ENCODE measurements at regions of chr6 and their contacts with region 1.

Region 1: GRCh38 chr6:144343701-144344428 is 58.7 kb downstream of the UTRN start:
- DNase-seq: peak in 4 of 5 donors; percentile 26 to 78 (median 69)
- H3K4me3 ChIP-seq: peak overlapping the region; percentile 75
- H3K4me3 Mint-ChIP-seq: peak overlapping the region; percentile 91 to 96 (median 94)
- H3K27ac ChIP-seq: peak overlapping the region; percentile 64
- H3K27ac Mint-ChIP-seq: peak overlapping the region; percentile 91 to 99 (median 96)
- H3K4me1 ChIP-seq: peaks cover 58% of the 10 kb centered on the region
- H3K4me1 Mint-ChIP-seq: peaks cover 72 to 90% (median 87%) of the 10 kb centered on the region in 3 donors
- H3K27me3 ChIP-seq: no peaks in the 10 kb centered on the region
- H3K27me3 Mint-ChIP-seq: peaks cover 0 to 1% of the 10 kb centered on the region in 2 donors

Region 2: DNA sequence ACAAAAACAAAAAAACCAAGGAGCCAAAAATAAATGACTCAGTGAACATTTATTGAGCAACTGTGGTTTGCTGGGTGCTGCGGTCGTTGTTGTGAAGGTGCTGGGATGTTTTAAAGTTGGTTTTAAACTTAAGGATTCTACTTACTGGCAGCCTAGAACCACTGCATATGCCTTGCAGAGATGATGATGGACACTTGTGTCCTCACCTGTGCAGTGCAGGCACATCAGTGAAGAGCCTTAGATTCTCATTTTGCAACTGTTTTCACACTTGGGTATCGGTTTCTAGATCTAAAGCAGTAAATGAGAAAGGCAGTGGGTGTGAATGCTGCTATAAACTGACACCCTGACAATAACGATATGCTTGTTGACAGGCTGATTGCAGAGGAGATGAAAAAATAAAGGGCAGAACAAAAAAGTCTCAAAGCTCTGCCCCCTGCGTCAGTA is 10.0 kb after region 1 on chr6:
- CTCF ChIA-PET with region 1: interaction called, 4 read pairs
- POLR2A ChIA-PET with region 1: interaction called, 15 read pairs
- DNase-seq: peak in 4 of 5 donors; percentile 36 to 70 (median 52)
- H3K4me3 ChIP-seq: no peak overlapping the region
- H3K4me3 Mint-ChIP-seq: peak overlapping the region; percentile 66 to 89 (median 75)
- H3K27ac ChIP-seq: peak overlapping the region; percentile 38
- H3K27ac Mint-ChIP-seq: peak overlapping the region; percentile 86 to 98 (median 96)
- H3K4me1 ChIP-seq: peaks cover 75% of the 10 kb centered on the region
- H3K4me1 Mint-ChIP-seq: peaks cover 86 to 99% (median 94%) of the 10 kb centered on the region in 3 donors
- H3K27me3 ChIP-seq: no peaks in the 10 kb centered on the region
- H3K27me3 Mint-ChIP-seq: no peaks in the 10 kb centered on the region